Endothelial cell of umbilical vein (primary cell): ENCODE measurements at regions of chr17 and their contacts with region 1.

Region 1: GRCh38 chr17:57995076-57995956 is 7.3 kb upstream of the VEZF1 start:
- DNase-seq: peak; percentile 82
- H3K4me3 ChIP-seq: no peak overlapping the region
- H3K27ac ChIP-seq: no peak overlapping the region
- H3K4me1 ChIP-seq: peaks cover 20% of the 10 kb centered on the region
- H3K27me3 ChIP-seq: no peaks in the 10 kb centered on the region
- CTCF ChIP-seq: peak; percentile 71 to 72
- POLR2A ChIP-seq: no peak

Region 2: GRCh38 chr17:57597531-57598453 is 397.5 kb before region 1 on chr17:
- CTCF ChIA-PET with region 1: interaction called, 7 read pairs
- POLR2A ChIA-PET with region 1: no interaction called
- dilution Hi-C with region 1: no loop called
- intact Hi-C with region 1: loop called (anchors 5 kb)
- DNase-seq: peak; percentile 67
- H3K4me3 ChIP-seq: no peak overlapping the region
- H3K27ac ChIP-seq: no peak overlapping the region
- H3K4me1 ChIP-seq: no peaks in the 10 kb centered on the region
- H3K27me3 ChIP-seq: peaks cover 7 to 9% of the 10 kb centered on the region in 2 experiments
- CTCF ChIP-seq: peak; percentile 78 to 79
- POLR2A ChIP-seq: no peak

Region 3: DNA sequence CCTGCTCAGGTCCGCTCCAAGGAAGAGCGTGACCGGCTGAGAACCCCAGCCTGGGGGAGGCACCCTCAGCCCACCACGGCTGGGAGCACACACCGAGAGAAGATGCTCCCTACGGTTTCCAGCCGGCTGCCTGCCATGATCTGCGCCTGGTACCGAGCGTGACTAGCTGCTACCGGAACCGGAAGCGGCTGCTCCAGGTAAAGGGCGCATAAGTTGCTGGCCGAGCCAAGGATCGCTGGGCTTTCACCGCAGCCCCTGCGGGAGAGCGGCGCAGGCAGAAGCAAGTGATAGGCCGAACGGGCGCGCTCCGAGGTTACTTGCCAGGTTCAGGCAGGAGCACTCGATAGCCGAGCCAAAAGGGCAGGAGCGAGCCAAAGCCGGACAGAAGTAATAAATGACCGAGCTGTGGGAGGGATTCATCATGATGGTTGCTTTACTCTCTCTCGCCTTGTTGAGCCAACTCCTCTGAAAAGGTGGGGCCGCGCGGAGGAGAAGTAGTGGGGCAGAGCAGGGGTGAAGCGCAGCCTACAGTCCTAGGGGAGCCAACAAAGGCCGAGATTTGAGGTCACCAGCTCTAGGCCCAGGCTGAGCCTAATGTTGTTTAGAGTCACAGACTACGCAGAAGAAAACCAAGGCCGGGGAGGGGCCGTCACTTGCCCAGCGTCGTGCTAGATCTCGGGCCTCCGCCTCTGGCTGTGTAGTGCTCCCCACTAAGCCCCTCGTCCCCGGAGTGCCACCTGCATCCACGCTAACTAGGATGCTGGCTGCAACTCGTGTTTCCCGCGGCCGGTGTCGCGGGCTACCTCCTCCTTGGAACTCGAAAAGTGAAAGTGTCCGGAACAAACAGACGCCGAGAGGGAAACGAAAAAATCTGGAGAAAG is 145.2 kb before region 1 on chr17 and contains the start of gene MRPS23:
- CTCF ChIA-PET with region 1: interaction called, 584 read pairs
- POLR2A ChIA-PET with region 1: no interaction called
- dilution Hi-C with region 1: loop called (anchors 25 kb)
- intact Hi-C with region 1: loop called (anchors 2 kb)
- DNase-seq: peak; percentile 99
- H3K4me3 ChIP-seq: peak within 1 kb of the TSS; percentile 50 to 81 (median 52)
- H3K27ac ChIP-seq: peak within 1 kb of the TSS; percentile 66
- H3K4me1 ChIP-seq: peaks cover 14% of the 10 kb centered on the region
- H3K27me3 ChIP-seq: no peaks in the 10 kb centered on the region
- CTCF ChIP-seq: no peak
- POLR2A ChIP-seq: peak; percentile 80
- total RNA-seq, gene MRPS23: 40.7 and 46.2 TPM in 2 replicates

Region 4: GRCh38 chr17:57875309-57876115 is 119.8 kb before region 1 on chr17:
- CTCF ChIA-PET with region 1: interaction called, 45 read pairs
- POLR2A ChIA-PET with region 1: interaction called, 6 read pairs
- dilution Hi-C with region 1: loop called (anchors 25 kb)
- intact Hi-C with region 1: loop called (anchors 1 kb)
- DNase-seq: peak; percentile 98
- H3K4me3 ChIP-seq: peak overlapping the region in 1 of 3 experiments; percentile 12
- H3K27ac ChIP-seq: peak overlapping the region; percentile 96
- H3K4me1 ChIP-seq: peaks cover 58% of the 10 kb centered on the region
- H3K27me3 ChIP-seq: no peaks in the 10 kb centered on the region
- CTCF ChIP-seq: peak; percentile 57 to 58
- POLR2A ChIP-seq: peak; percentile 5

Region 5: GRCh38 chr17:57946798-57947358 is 48.4 kb before region 1 on chr17:
- CTCF ChIA-PET with region 1: interaction called, 15 read pairs
- POLR2A ChIA-PET with region 1: no interaction called
- dilution Hi-C with region 1: no loop called
- intact Hi-C with region 1: no loop called
- DNase-seq: peak; percentile 70
- H3K4me3 ChIP-seq: peak overlapping the region in 2 of 3 experiments; percentile 8 to 36
- H3K27ac ChIP-seq: no peak overlapping the region
- H3K4me1 ChIP-seq: peaks cover 37% of the 10 kb centered on the region
- H3K27me3 ChIP-seq: no peaks in the 10 kb centered on the region
- CTCF ChIP-seq: no peak
- POLR2A ChIP-seq: no peak

Region 6: DNA sequence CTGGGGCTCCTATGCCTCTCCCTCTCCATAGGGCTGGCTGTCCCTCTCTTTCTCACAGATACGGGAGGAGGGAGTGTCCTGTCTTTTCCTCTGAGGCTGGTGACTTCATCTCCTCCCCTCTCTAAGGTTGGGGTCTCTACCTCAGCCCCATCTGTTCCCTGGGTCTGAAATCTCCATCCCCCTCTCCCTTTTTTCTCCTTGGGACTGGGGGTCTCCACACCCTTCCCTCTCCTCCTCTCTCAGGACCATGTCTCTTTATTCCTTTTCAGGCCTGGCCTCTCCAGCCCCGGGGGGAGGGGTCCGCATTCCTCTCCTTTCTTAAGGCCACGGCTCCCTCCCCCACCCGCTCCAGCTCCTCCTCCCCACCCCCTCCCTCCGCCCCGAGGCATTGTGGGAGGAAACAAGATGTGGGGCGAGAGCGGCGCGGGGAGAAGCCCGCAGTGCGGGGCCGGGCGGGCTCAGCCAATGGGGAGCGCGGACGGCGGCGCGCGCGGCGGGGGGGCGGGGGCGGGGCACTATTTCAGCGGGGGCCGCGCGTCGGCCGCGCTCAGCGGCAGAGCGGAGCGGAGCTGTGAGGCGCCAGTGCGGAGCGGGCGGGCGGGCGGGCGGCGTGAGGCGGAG is 87.7 kb after region 1 on chr17 and contains the start of gene DYNLL2:
- CTCF ChIA-PET with region 1: interaction called, 12 read pairs
- POLR2A ChIA-PET with region 1: interaction called, 4 read pairs
- dilution Hi-C with region 1: no loop called
- intact Hi-C with region 1: no loop called
- DNase-seq: peak; percentile 78
- H3K4me3 ChIP-seq: peak within 1 kb of the TSS; percentile 53 to 97 (median 61)
- H3K27ac ChIP-seq: peak within 1 kb of the TSS; percentile 37
- H3K4me1 ChIP-seq: peaks cover 12% of the 10 kb centered on the region
- H3K27me3 ChIP-seq: peaks cover 10 to 15% of the 10 kb centered on the region in 2 experiments
- CTCF ChIP-seq: no peak
- POLR2A ChIP-seq: no peak
- total RNA-seq, gene DYNLL2: 17.1 and 19.0 TPM in 2 replicates